IMR-90 (cell line): ENCODE measurements at regions of chr7 and their contacts with region 1.

Region 1: DNA sequence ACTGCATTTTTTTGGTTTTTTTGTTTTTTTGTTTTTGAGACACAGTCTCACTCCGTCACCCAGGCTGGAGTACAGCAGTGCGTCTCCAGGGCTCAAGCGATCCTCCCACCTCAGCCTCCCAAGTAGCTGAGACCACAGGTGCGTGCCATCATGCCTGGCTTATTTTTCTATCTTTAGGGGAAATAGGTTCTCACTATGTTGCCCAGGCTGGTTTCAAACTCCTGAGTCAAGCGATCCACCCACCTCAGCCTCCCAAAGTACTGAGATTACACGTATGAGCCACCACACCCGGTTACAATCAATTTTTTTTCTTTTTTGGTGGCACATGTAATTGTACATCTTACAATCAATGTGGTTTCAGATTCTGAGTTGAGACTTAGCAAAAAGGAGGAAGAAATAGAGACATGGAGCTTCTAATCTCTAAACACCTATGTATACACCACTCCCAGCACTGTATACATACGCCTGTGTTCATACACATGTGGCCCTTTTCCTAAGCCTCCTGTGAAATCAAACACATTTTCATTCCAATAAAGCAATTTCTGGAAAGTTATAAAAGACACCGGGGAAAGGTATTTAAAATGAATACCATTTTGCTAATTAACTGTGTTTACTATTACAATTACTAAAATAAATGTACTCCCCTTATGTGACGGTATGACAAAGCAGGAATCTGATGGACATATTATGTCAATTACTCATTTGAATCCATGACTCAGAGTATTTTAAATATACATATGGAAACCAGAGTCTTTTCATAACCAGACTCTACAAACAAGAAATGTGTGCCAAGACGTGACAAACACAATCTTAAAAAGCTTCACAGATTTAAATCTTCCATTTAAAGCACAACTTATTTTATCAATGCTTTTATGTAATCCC is 40.9 kb downstream of the SMURF1 start:
- DNase-seq: peak; percentile 92
- ATAC-seq: peak; percentile 58
- H3K4me3 ChIP-seq: no peak overlapping the region
- H3K27ac ChIP-seq: peak overlapping the region; percentile 52
- H3K4me1 ChIP-seq: peaks cover 25% of the 10 kb centered on the region
- H3K27me3 ChIP-seq: no peaks in the 10 kb centered on the region
- CTCF ChIP-seq: no peak
- POLR2A ChIP-seq: no peak
- RAD21 ChIP-seq: no peak

Region 2: GRCh38 chr7:99137411-99138180 is 34.5 kb after region 1 on chr7:
- CTCF ChIA-PET with region 1: no interaction called
- POLR2A ChIA-PET with region 1: no interaction called
- dilution Hi-C with region 1: no loop called
- in situ Hi-C with region 1: no loop called
- intact Hi-C with region 1: loop called (anchors 5 kb)
- DNase-seq: peak; percentile 90
- ATAC-seq: peak; percentile 63
- H3K4me3 ChIP-seq: peak overlapping the region; percentile 20; the same call in 1 of the 2 replicates
- H3K27ac ChIP-seq: peak overlapping the region; percentile 84
- H3K4me1 ChIP-seq: peaks cover 19% of the 10 kb centered on the region
- H3K27me3 ChIP-seq: no peaks in the 10 kb centered on the region
- CTCF ChIP-seq: no peak
- POLR2A ChIP-seq: no peak
- RAD21 ChIP-seq: peak; percentile 14; the same call in 1 of the 2 replicates